RWPE1 (cell line): ENCODE measurements at regions of chr10 and their contacts with region 1.

Region 1: GRCh38 chr10:11757821-11758463 is 15.8 kb downstream of the ECHDC3 start:
- DNase-seq: peak; percentile 89
- H3K27ac ChIP-seq: peak overlapping the region; percentile 95
- CTCF ChIP-seq: peak; percentile 93

Region 2: GRCh38 chr10:11515596-11516430 is 242.1 kb before region 1 on chr10:
- CTCF ChIA-PET with region 1: interaction called, 17 read pairs
- POLR2A ChIA-PET with region 1: no interaction called
- DNase-seq: peak; percentile 49
- H3K27ac ChIP-seq: no peak overlapping the region
- CTCF ChIP-seq: peak; percentile 81

Region 3: GRCh38 chr10:11724938-11725776 is 32.8 kb before region 1 on chr10:
- CTCF ChIA-PET with region 1: interaction called, 12 read pairs
- POLR2A ChIA-PET with region 1: no interaction called
- DNase-seq: peak; percentile 72
- H3K27ac ChIP-seq: no peak overlapping the region
- CTCF ChIP-seq: peak; percentile 67

Region 4: GRCh38 chr10:11742005-11742778 is 15.8 kb before region 1 on chr10 and contains the start of gene ECHDC3:
- CTCF ChIA-PET with region 1: interaction called, 10 read pairs
- POLR2A ChIA-PET with region 1: no interaction called
- DNase-seq: peak; percentile 63
- H3K27ac ChIP-seq: peak within 1 kb of the TSS; percentile 39
- CTCF ChIP-seq: no peak

Region 5: GRCh38 chr10:11773761-11774441 is 16.0 kb after region 1 on chr10:
- CTCF ChIA-PET with region 1: no interaction called
- POLR2A ChIA-PET with region 1: no interaction called
- DNase-seq: no peak
- H3K27ac ChIP-seq: no peak overlapping the region
- CTCF ChIP-seq: no peak

Region 6: GRCh38 chr10:11869698-11870460 is 111.9 kb after region 1 on chr10:
- CTCF ChIA-PET with region 1: no interaction called
- POLR2A ChIA-PET with region 1: no interaction called
- DNase-seq: no peak
- H3K27ac ChIP-seq: peak overlapping the region; percentile 24
- CTCF ChIP-seq: no peak